ENCODE measurements at regions of chr14 and their contacts with region 1.

Region 1: DNA sequence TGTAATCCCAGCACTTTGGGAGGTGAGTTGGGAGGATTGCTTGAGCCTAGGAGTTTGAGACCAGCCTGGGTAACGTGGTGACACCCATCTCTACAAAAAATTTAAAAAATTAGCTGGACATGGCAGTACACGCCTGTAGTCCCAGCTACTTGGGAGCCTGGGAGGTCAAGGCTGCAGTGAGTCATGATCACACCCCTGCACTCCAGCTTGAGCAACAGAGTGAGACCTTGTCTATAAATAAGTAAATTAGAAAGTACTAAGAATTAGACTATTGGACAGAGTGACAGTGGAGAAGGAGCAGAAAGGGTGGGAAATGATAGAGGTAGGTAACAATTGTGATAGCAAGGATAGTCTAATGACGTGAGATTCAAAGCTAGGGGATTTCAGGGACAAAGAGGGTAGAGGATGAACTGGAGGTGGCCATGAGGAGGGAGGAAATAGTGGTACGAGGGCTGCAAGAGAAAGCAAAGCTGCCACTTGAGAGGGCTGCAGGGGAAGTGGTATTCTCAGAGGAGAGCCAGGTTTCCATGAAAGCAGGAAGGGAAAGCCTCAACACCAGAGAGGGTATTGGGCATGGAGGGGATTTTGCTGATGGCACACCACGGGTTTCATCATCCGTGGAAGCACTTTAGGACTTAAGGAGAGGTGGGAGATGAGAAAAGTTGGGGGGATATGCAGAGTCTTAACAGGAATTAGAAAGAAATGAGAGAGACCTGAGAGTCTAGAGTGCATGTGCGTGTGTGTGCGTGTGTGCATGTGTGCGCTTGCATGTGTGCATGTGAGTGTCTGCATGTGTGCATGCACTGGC is 85.6 kb downstream of the SYNE2 start:
- DNase-seq: peak in 4 of 9 donors; percentile 11 to 25 (median 16)
- ATAC-seq: peak; percentile 58
- H3K4me3 ChIP-seq: peak overlapping the region; percentile 3
- H3K4me3 Mint-ChIP-seq: no peak overlapping the region
- H3K27ac ChIP-seq: peak overlapping the region; percentile 42
- H3K27ac Mint-ChIP-seq: no peak overlapping the region
- H3K4me1 ChIP-seq: peaks cover 41 to 46% of the 10 kb centered on the region in 2 donors
- H3K4me1 Mint-ChIP-seq: peaks cover 22 to 45% (median 40%) of the 10 kb centered on the region in 7 donors
- H3K27me3 ChIP-seq: no peaks in the 10 kb centered on the region
- H3K27me3 Mint-ChIP-seq: no peaks in the 10 kb centered on the region

Region 2: GRCh38 chr14:63248211-63248610 is 690.2 kb before region 1 on chr14:
- CTCF ChIA-PET with region 1: no interaction called
- POLR2A ChIA-PET with region 1: no interaction called
- intact Hi-C with region 1: no loop called
- DNase-seq: no peak
- ATAC-seq: no peak
- H3K4me3 ChIP-seq: no peak overlapping the region
- H3K4me3 Mint-ChIP-seq: no peak overlapping the region
- H3K27ac ChIP-seq: no peak overlapping the region
- H3K27ac Mint-ChIP-seq: no peak overlapping the region
- H3K4me1 ChIP-seq: no peaks in the 10 kb centered on the region
- H3K4me1 Mint-ChIP-seq: no peaks in the 10 kb centered on the region
- H3K27me3 ChIP-seq: no peaks in the 10 kb centered on the region
- H3K27me3 Mint-ChIP-seq: peaks cover 2 to 47% (median 42%) of the 10 kb centered on the region in 5 donors

Region 3: GRCh38 chr14:63852817-63853731 is 85.3 kb before region 1 on chr14 and contains the start of gene SYNE2:
- CTCF ChIA-PET with region 1: no interaction called
- POLR2A ChIA-PET with region 1: interaction called, 7 read pairs
- intact Hi-C with region 1: loop called (anchors 1 kb)
- DNase-seq: peak; percentile 67 to 89 (median 80)
- ATAC-seq: peak; percentile 90
- H3K4me3 ChIP-seq: peak within 1 kb of the TSS; percentile 52
- H3K4me3 Mint-ChIP-seq: peak within 1 kb of the TSS; percentile 85 to 99 (median 98)
- H3K27ac ChIP-seq: peak within 1 kb of the TSS; percentile 72
- H3K27ac Mint-ChIP-seq: peak within 1 kb of the TSS; percentile 77 to 98 (median 91)
- H3K4me1 ChIP-seq: peaks cover 29 to 39% of the 10 kb centered on the region in 2 donors
- H3K4me1 Mint-ChIP-seq: peaks cover 30 to 44% (median 42%) of the 10 kb centered on the region in 7 donors
- H3K27me3 ChIP-seq: no peaks in the 10 kb centered on the region
- H3K27me3 Mint-ChIP-seq: peaks cover 0 to 25% (median 0%) of the 10 kb centered on the region in 5 donors
- total RNA-seq, gene SYNE2: 77.7 to 170 (median 149) TPM

Region 4: GRCh38 chr14:63863004-63863403 is 75.4 kb before region 1 on chr14:
- CTCF ChIA-PET with region 1: interaction called, 4 read pairs
- POLR2A ChIA-PET with region 1: interaction called, 18 read pairs
- intact Hi-C with region 1: loop called in 1 of 2 experiments (anchors 2 kb)
- DNase-seq: no peak
- ATAC-seq: no peak
- H3K4me3 ChIP-seq: no peak overlapping the region
- H3K4me3 Mint-ChIP-seq: peak overlapping the region in 5 of 10 donors; percentile 43 to 75 (median 58)
- H3K27ac ChIP-seq: peak overlapping the region; percentile 84
- H3K27ac Mint-ChIP-seq: peak overlapping the region; percentile 75 to 100 (median 90)
- H3K4me1 ChIP-seq: peaks cover 35 to 75% of the 10 kb centered on the region in 2 donors
- H3K4me1 Mint-ChIP-seq: peaks cover 26 to 77% (median 58%) of the 10 kb centered on the region in 7 donors
- H3K27me3 ChIP-seq: no peaks in the 10 kb centered on the region
- H3K27me3 Mint-ChIP-seq: peaks cover 0 to 2% (median 0%) of the 10 kb centered on the region in 5 donors

Region 5: DNA sequence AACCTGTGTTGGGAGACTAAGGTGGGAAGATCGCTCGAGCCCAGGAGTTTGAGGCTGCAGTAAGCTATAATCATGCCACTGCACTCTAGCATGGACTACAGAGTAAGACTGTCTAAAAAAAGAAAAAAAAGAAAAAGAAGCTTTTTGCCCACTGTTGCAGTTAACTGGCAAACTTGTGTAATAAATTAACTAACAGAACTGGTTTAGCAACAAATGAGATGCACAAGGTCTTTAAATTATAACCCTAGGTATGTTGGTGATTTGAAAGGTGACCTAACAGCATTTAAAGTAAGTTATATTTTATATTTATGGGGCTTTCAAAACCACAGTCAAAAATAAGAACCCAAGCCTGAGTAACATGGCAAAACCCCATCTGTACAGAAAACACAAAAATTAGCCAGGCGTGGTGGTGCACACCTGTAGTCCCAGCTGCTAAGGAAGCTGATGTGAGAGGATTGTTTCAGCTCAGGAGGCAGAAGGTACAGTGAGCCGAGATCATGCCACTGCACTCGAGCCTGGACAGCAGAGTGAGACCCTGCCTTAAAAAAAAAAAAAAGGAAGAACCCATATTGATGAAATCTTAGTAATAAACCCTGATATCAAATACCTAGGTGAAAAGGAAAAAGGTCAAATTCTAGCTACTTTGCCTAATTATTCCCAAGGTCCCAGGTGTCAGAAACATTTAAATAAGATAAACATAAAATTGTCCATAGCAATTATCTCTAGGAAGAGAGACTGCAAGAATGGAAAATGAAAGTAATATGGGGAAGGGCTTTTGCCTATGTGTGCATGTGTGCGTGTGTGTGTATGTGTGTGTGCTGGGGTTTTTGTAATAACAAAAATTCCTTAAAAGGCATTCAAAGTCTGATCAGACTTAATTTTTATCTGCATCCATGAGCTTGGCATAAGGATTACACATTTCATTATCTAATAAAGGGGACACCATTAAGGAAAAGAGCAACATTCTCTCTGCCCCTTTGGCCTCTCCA is 70.2 kb before region 1 on chr14:
- CTCF ChIA-PET with region 1: interaction called, 4 read pairs
- POLR2A ChIA-PET with region 1: interaction called, 18 read pairs
- intact Hi-C with region 1: loop called in 1 of 2 experiments (anchors 2 kb)
- DNase-seq: peak in 6 of 9 donors; percentile 15 to 44 (median 28)
- ATAC-seq: no peak
- H3K4me3 ChIP-seq: no peak overlapping the region
- H3K4me3 Mint-ChIP-seq: peak overlapping the region; percentile 46 to 84 (median 75)
- H3K27ac ChIP-seq: peak overlapping the region; percentile 36
- H3K27ac Mint-ChIP-seq: peak overlapping the region; percentile 84 to 98 (median 92)
- H3K4me1 ChIP-seq: peaks cover 36 to 60% of the 10 kb centered on the region in 2 donors
- H3K4me1 Mint-ChIP-seq: peaks cover 37 to 78% (median 64%) of the 10 kb centered on the region in 7 donors
- H3K27me3 ChIP-seq: no peaks in the 10 kb centered on the region
- H3K27me3 Mint-ChIP-seq: no peaks in the 10 kb centered on the region

Region 6: DNA sequence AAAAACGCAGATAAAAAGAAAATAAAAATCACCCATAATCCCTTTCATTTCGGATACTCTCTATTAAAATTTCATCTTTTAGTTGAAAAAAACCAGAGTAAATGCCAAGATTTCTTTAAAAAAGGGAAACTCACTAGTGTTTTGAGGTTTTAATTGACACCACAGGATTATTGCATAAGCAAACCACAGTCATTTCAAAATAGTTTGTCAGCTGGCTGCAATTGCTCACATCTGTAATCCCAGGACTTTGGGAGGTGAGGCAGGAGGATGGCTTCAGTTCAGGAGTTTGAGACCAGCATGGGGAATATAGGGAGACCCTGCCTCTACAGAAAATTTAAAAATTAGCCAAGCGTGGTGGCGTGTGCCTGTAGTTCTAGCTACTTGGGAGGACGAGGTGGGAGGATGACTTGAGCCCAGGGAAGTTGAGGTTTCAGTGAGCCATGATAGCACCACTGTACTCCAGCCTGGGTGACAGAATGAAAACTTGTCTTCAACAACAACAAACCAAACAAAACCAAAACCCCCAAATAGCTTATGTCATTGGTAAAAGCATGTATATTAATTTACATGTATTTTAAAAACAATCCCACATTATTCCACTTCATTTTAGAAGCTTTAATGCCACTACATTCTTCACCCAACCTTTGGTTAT is 36.8 kb before region 1 on chr14:
- CTCF ChIA-PET with region 1: no interaction called
- POLR2A ChIA-PET with region 1: interaction called, 3 read pairs
- intact Hi-C with region 1: loop called (anchors 5 kb)
- DNase-seq: no peak
- ATAC-seq: no peak
- H3K4me3 ChIP-seq: no peak overlapping the region
- H3K4me3 Mint-ChIP-seq: peak overlapping the region in 1 of 10 donors; percentile 41
- H3K27ac ChIP-seq: no peak overlapping the region
- H3K27ac Mint-ChIP-seq: peak overlapping the region in 2 of 9 donors; percentile 12 to 65
- H3K4me1 ChIP-seq: peaks cover 10 to 22% of the 10 kb centered on the region in 2 donors
- H3K4me1 Mint-ChIP-seq: peaks cover 29 to 66% (median 47%) of the 10 kb centered on the region in 7 donors
- H3K27me3 ChIP-seq: no peaks in the 10 kb centered on the region
- H3K27me3 Mint-ChIP-seq: peaks cover 0 to 5% (median 0%) of the 10 kb centered on the region in 5 donors

Region 7: DNA sequence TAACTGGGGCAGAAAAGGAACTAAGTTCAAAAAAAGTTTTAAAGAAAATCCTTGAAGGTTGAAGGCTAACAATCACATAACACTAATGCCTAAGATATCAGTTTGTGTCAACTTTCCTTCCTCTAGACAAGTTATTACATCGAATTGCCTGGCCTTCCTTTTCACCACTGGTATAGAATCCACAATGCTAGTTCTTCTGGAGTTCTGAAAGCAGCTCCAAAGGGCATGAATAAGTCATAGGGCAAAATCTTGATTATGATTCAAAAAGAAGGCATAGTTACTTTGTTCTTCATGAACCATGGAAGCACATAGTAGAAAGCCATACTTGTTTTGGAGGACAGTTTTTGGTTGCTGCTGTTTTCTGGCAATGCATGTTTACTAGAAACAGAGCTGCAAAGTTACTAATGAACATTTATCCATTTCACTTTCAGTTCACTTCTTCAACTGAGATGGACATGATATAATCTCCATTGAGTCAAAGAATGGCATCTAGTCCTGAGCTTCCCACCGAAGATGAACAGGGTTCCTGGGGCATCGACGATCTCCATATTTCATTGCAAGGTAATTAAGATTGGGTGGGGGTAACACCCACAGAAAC is 29.6 kb before region 1 on chr14:
- CTCF ChIA-PET with region 1: interaction called, 4 read pairs
- POLR2A ChIA-PET with region 1: interaction called, 3 read pairs
- intact Hi-C with region 1: loop called (anchors 5 kb)
- DNase-seq: no peak
- ATAC-seq: no peak
- H3K4me3 ChIP-seq: no peak overlapping the region
- H3K4me3 Mint-ChIP-seq: peak overlapping the region in 9 of 10 donors; percentile 40 to 79 (median 71)
- H3K27ac ChIP-seq: no peak overlapping the region
- H3K27ac Mint-ChIP-seq: peak overlapping the region in 6 of 9 donors; percentile 4 to 79 (median 54)
- H3K4me1 ChIP-seq: peaks cover 0 to 14% of the 10 kb centered on the region in 2 donors
- H3K4me1 Mint-ChIP-seq: peaks cover 25 to 65% (median 48%) of the 10 kb centered on the region in 7 donors
- H3K27me3 ChIP-seq: no peaks in the 10 kb centered on the region
- H3K27me3 Mint-ChIP-seq: peaks cover 0 to 5% (median 0%) of the 10 kb centered on the region in 5 donors

Region 8: DNA sequence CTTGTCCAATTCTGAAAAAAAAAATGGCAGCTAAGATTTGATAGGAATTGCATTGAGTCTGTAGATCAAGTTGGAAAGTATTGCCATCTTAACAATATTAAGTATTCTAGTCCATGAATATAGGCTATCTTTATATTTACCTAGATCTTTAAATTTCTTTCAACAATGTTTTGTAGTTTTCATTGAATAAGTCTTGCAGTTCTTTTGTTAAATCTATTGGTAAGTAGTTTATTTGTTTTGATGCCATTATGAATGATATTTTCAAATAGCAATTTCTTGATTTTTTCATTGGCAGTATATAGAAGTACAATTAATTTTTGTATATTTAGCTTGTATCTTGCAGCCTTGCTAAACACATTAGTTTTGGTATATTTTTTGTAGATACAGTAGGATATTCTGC is 14.0 kb before region 1 on chr14:
- CTCF ChIA-PET with region 1: no interaction called
- POLR2A ChIA-PET with region 1: interaction called, 4 read pairs
- intact Hi-C with region 1: loop called in 1 of 2 experiments (anchors 2 kb)
- DNase-seq: no peak
- ATAC-seq: no peak
- H3K4me3 ChIP-seq: no peak overlapping the region
- H3K4me3 Mint-ChIP-seq: no peak overlapping the region
- H3K27ac ChIP-seq: no peak overlapping the region
- H3K27ac Mint-ChIP-seq: no peak overlapping the region
- H3K4me1 ChIP-seq: no peaks in the 10 kb centered on the region
- H3K4me1 Mint-ChIP-seq: peaks cover 0 to 16% (median 7%) of the 10 kb centered on the region in 7 donors
- H3K27me3 ChIP-seq: no peaks in the 10 kb centered on the region
- H3K27me3 Mint-ChIP-seq: no peaks in the 10 kb centered on the region

Measured in naive thymus-derived CD4-positive, alpha-beta T cell (primary cell).